ENCODE measurements at regions of chr9 and their contacts with region 1.

Region 1: DNA sequence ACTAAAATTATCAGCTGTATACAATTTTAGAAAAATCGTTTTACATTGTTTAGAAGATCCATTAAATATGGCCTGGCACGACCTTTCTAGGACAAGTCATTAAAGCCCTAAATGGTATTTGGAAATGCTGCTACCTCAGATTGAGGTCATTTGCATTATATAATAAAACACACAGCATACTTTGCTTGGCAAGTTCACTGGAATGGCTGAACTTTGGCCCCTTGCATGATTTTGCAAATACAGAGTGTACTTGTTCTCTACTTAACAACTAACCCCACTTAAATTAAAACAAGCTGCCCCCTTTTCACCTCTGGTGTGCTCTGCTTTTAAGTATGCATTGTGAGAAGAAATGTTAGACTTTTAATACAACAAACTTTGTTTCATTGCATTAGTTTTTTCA is 860.1 kb downstream of the PTPRD start:
- DNase-seq: no peak
- H3K4me3 ChIP-seq: no peak overlapping the region
- H3K4me3 Mint-ChIP-seq: no peak overlapping the region
- H3K27ac ChIP-seq: no peak overlapping the region
- H3K27ac Mint-ChIP-seq: no peak overlapping the region
- H3K4me1 ChIP-seq: no peaks in the 10 kb centered on the region
- H3K4me1 Mint-ChIP-seq: no peaks in the 10 kb centered on the region
- H3K27me3 ChIP-seq: no peaks in the 10 kb centered on the region
- H3K27me3 Mint-ChIP-seq: no peaks in the 10 kb centered on the region

Region 2: GRCh38 chr9:9804109-9804508 is 51.4 kb after region 1 on chr9:
- CTCF ChIA-PET with region 1: no interaction called
- POLR2A ChIA-PET with region 1: no interaction called
- intact Hi-C with region 1: loop called (anchors 10 kb)
- DNase-seq: no peak
- H3K4me3 ChIP-seq: no peak overlapping the region
- H3K4me3 Mint-ChIP-seq: no peak overlapping the region
- H3K27ac ChIP-seq: no peak overlapping the region
- H3K27ac Mint-ChIP-seq: no peak overlapping the region
- H3K4me1 ChIP-seq: no peaks in the 10 kb centered on the region
- H3K4me1 Mint-ChIP-seq: no peaks in the 10 kb centered on the region
- H3K27me3 ChIP-seq: no peaks in the 10 kb centered on the region
- H3K27me3 Mint-ChIP-seq: no peaks in the 10 kb centered on the region

Measured in CD4-positive, alpha-beta memory T cell (primary cell).